ENCODE measurements at regions of chr11 and their contacts with region 1.

Region 1: GRCh38 chr11:9506489-9507276 is 45.9 kb downstream of the ZNF143 start:
- DNase-seq: peak; percentile 83
- ATAC-seq: peak; percentile 77
- H3K4me3 Mint-ChIP-seq: no peak overlapping the region
- H3K27ac Mint-ChIP-seq: no peak overlapping the region
- H3K4me1 Mint-ChIP-seq: peaks cover 13% of the 10 kb centered on the region
- H3K27me3 Mint-ChIP-seq: no peaks in the 10 kb centered on the region

Region 2: GRCh38 chr11:9015677-9016076 is 491.0 kb before region 1 on chr11:
- CTCF ChIA-PET with region 1: interaction called, 25 read pairs
- DNase-seq: peak; percentile 73
- ATAC-seq: peak; percentile 87
- H3K4me3 Mint-ChIP-seq: no peak overlapping the region
- H3K27ac Mint-ChIP-seq: no peak overlapping the region
- H3K4me1 Mint-ChIP-seq: peaks cover 18% of the 10 kb centered on the region
- H3K27me3 Mint-ChIP-seq: peaks cover 19% of the 10 kb centered on the region

Region 3: GRCh38 chr11:9137293-9138132 is 369.2 kb before region 1 on chr11:
- CTCF ChIA-PET with region 1: interaction called, 11 read pairs
- DNase-seq: peak; percentile 76
- ATAC-seq: peak; percentile 97
- H3K4me3 Mint-ChIP-seq: no peak overlapping the region
- H3K27ac Mint-ChIP-seq: peak overlapping the region; percentile 20
- H3K4me1 Mint-ChIP-seq: peaks cover 21% of the 10 kb centered on the region
- H3K27me3 Mint-ChIP-seq: no peaks in the 10 kb centered on the region

Region 4: DNA sequence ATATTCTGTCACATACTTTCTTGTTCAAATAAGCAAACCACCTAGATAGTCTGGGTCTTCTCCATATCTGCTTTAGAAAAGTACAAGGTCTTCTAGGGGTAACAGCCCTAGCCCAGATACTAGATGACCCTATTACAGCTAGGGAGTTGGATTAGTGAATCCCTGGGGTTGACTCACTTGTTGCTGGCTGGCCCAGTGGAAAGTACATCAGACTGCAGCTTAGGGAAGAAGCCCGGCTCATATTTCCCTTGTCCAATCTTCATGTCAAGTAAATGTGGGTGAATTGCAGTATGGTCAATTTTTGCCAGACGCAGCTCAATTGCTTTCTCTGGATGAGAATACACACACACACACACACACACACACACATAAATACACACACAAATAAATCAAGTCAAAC is 336.2 kb before region 1 on chr11:
- CTCF ChIA-PET with region 1: interaction called, 59 read pairs
- DNase-seq: no peak
- ATAC-seq: no peak
- H3K4me3 Mint-ChIP-seq: no peak overlapping the region
- H3K27ac Mint-ChIP-seq: no peak overlapping the region
- H3K4me1 Mint-ChIP-seq: peaks cover 13% of the 10 kb centered on the region
- H3K27me3 Mint-ChIP-seq: no peaks in the 10 kb centered on the region

Region 5: DNA sequence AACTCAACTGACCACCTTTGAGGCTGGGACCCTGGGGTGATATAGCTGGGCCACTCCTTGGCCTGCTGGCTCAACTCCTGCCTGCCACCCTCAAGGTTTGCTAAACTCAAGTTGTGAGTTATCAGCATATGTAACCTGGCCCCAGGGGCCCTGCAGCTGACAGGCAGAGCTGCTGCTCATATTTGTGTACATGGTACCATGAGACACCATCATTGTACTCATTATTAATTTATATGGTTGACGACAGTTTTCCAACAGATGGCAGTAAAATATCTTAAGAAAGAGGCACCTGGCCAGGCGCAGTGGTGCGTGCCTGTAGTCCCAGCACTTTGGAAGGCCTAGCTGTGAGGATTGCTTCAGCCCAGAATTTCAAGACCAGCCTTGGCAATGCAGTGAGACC is 230.2 kb before region 1 on chr11:
- CTCF ChIA-PET with region 1: interaction called, 13 read pairs
- DNase-seq: no peak
- ATAC-seq: no peak
- H3K4me3 Mint-ChIP-seq: no peak overlapping the region
- H3K27ac Mint-ChIP-seq: no peak overlapping the region
- H3K4me1 Mint-ChIP-seq: peaks cover 14% of the 10 kb centered on the region
- H3K27me3 Mint-ChIP-seq: peaks cover 12% of the 10 kb centered on the region

Region 6: GRCh38 chr11:9357041-9357440 is 149.6 kb before region 1 on chr11:
- CTCF ChIA-PET with region 1: no interaction called
- DNase-seq: no peak
- ATAC-seq: no peak
- H3K4me3 Mint-ChIP-seq: no peak overlapping the region
- H3K27ac Mint-ChIP-seq: no peak overlapping the region
- H3K4me1 Mint-ChIP-seq: peaks cover 8% of the 10 kb centered on the region
- H3K27me3 Mint-ChIP-seq: peaks cover 2% of the 10 kb centered on the region

Region 7: GRCh38 chr11:9460322-9461067 is 46.2 kb before region 1 on chr11 and contains the start of gene ZNF143:
- CTCF ChIA-PET with region 1: interaction called, 21 read pairs
- DNase-seq: peak; percentile 100
- ATAC-seq: peak; percentile 90
- H3K4me3 Mint-ChIP-seq: peak within 1 kb of the TSS; percentile 97
- H3K27ac Mint-ChIP-seq: peak within 1 kb of the TSS; percentile 99
- H3K4me1 Mint-ChIP-seq: peaks cover 32% of the 10 kb centered on the region
- H3K27me3 Mint-ChIP-seq: no peaks in the 10 kb centered on the region
- total RNA-seq, gene ZNF143: 39.5 to 44.2 TPM

Region 8: GRCh38 chr11:9489080-9489765 is 17.5 kb before region 1 on chr11:
- CTCF ChIA-PET with region 1: interaction called, 15 read pairs
- DNase-seq: no peak
- ATAC-seq: no peak
- H3K4me3 Mint-ChIP-seq: no peak overlapping the region
- H3K27ac Mint-ChIP-seq: no peak overlapping the region
- H3K4me1 Mint-ChIP-seq: peaks cover 2% of the 10 kb centered on the region
- H3K27me3 Mint-ChIP-seq: no peaks in the 10 kb centered on the region

Region 9: GRCh38 chr11:9626496-9627394 is 120.1 kb after region 1 on chr11:
- CTCF ChIA-PET with region 1: no interaction called
- DNase-seq: no peak
- ATAC-seq: no peak
- H3K4me3 Mint-ChIP-seq: no peak overlapping the region
- H3K27ac Mint-ChIP-seq: no peak overlapping the region
- H3K4me1 Mint-ChIP-seq: no peaks in the 10 kb centered on the region
- H3K27me3 Mint-ChIP-seq: peaks cover 32% of the 10 kb centered on the region

Measured in activated CD8-positive, alpha-beta memory T cell treated with anti-CD3 and anti-CD28 coated beads, Interleukin-2, amount 10 ng/mL, durations not matched to agents 7 days and 5 days (primary cell).